MCF 10A (cell line): ENCODE measurements at regions of chr9 and their contacts with region 1.

Region 1: GRCh38 chr9:136790927-136791641 is at the start of gene TMEM141:
- DNase-seq: peak; percentile 99
- H3K4me3 Mint-ChIP-seq: peak within 1 kb of the TSS; percentile 81
- H3K27ac Mint-ChIP-seq: peak within 1 kb of the TSS; percentile 94
- H3K4me1 Mint-ChIP-seq: peaks cover 5% of the 10 kb centered on the region
- H3K27me3 Mint-ChIP-seq: no peaks in the 10 kb centered on the region
- CTCF ChIP-seq: no peak
- total RNA-seq, gene TMEM141: 56.0 and 70.4 TPM in 2 replicates

Region 2: DNA sequence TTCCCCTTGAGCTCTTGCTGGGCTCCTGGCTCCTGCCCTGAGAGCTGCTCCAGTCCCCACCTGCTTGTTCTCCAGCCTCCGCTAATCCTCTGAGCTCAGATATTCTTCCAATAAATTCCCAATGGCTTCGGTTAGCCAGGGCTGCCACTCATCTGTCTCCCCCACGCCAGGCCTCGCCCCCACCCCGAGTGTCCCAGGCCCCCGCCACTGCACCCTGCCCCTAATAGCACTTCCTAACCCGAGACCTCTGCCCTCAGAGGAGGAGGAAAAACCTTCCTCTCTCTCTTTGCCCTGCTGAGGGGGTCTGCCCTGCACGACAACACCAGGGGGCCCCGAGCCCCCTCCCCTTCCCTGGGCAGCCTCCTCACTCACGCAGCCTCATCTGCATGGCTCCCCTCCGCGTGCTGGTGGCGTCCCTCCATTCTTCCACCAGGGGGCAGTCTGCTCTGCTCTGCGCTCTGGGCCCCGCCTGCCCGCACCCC is 21.3 kb before region 1 on chr9:
- CTCF ChIA-PET with region 1: interaction called, 11 read pairs
- POLR2A ChIA-PET with region 1: no interaction called
- intact Hi-C with region 1: no loop called
- DNase-seq: peak; percentile 13
- H3K4me3 Mint-ChIP-seq: no peak overlapping the region
- H3K27ac Mint-ChIP-seq: no peak overlapping the region
- H3K4me1 Mint-ChIP-seq: peaks cover 7% of the 10 kb centered on the region
- H3K27me3 Mint-ChIP-seq: no peaks in the 10 kb centered on the region
- CTCF ChIP-seq: peak; percentile 37

Region 3: DNA sequence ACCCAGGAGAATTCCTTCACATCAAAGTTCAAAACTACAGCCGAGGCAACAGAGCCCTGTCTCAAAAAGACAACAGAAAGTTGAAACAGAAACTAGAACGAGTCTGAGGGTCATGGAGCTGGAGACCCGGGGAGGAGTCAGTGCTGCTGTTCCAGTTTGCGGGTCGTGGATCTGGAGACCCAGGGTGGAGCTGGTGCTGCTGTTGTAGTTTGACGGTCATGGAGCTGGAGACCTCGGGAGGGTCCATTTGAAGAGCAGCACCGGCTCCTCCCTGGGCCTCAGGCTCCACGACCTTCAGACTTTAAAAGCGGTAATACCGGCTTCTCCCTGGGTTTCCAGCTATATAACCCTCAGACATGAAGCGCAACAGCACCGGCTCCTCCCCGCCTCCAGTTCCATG is 13.7 kb before region 1 on chr9:
- CTCF ChIA-PET with region 1: interaction called, 18 read pairs
- POLR2A ChIA-PET with region 1: no interaction called
- intact Hi-C with region 1: no loop called
- DNase-seq: no peak
- H3K4me3 Mint-ChIP-seq: no peak overlapping the region
- H3K27ac Mint-ChIP-seq: no peak overlapping the region
- H3K4me1 Mint-ChIP-seq: no peaks in the 10 kb centered on the region
- H3K27me3 Mint-ChIP-seq: peaks cover 59% of the 10 kb centered on the region
- CTCF ChIP-seq: no peak

Region 4: GRCh38 chr9:136802331-136802730 is 11.2 kb after region 1 on chr9:
- CTCF ChIA-PET with region 1: interaction called, 12 read pairs
- POLR2A ChIA-PET with region 1: interaction called, 33 read pairs
- intact Hi-C with region 1: no loop called
- DNase-seq: no peak
- H3K4me3 Mint-ChIP-seq: no peak overlapping the region
- H3K27ac Mint-ChIP-seq: no peak overlapping the region
- H3K4me1 Mint-ChIP-seq: peaks cover 14% of the 10 kb centered on the region
- H3K27me3 Mint-ChIP-seq: no peaks in the 10 kb centered on the region
- CTCF ChIP-seq: no peak

Region 5: DNA sequence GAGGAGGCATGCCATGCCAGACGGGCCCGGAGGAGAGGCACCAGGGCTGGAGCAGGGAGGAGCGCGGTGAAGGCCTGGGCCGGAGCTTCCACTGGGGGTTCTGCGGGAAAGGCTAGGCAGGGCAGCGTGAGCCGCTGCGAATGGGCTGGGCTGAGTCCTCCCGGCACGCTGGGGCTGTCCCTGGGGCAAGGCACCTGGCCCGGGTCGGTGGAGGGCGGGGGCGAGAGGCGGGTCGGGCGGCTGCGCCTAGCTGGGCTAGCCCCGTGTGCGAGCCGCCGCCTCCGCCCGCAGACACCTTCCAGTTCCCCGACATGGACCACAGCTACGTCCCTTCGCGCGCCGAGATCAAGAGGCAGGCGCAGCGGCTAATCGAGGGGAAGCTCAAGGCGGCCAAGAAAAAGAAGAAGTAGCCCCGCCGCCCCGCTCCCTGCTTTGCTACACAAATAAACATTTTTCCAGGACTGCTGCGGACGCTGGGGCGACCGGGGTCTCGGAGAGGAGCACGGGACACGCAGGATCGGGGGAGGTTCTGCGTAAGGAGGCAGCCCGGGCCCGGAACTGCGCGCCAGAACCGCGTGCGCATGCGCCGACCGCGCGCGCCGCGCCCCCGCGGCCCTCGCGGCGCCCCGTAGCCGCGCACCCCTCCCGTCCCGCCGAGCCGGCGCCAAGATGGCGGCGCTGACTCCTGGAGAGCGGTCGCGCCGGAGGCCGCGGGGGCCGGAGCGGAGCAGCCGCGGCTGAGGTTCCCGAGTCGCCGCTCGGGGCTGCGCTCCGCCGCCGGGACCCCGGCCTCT is 16.4 kb after region 1 on chr9 and contains the start of gene RABL6:
- CTCF ChIA-PET with region 1: interaction called, 12 read pairs
- POLR2A ChIA-PET with region 1: interaction called, 33 read pairs
- intact Hi-C with region 1: no loop called
- DNase-seq: peak; percentile 64
- H3K4me3 Mint-ChIP-seq: peak within 1 kb of the TSS; percentile 76
- H3K27ac Mint-ChIP-seq: no peak within 1 kb of the TSS
- H3K4me1 Mint-ChIP-seq: no peaks in the 10 kb centered on the region
- H3K27me3 Mint-ChIP-seq: no peaks in the 10 kb centered on the region
- CTCF ChIP-seq: no peak
- total RNA-seq, gene RABL6: 77.8 and 84.2 TPM in 2 replicates

Region 6: DNA sequence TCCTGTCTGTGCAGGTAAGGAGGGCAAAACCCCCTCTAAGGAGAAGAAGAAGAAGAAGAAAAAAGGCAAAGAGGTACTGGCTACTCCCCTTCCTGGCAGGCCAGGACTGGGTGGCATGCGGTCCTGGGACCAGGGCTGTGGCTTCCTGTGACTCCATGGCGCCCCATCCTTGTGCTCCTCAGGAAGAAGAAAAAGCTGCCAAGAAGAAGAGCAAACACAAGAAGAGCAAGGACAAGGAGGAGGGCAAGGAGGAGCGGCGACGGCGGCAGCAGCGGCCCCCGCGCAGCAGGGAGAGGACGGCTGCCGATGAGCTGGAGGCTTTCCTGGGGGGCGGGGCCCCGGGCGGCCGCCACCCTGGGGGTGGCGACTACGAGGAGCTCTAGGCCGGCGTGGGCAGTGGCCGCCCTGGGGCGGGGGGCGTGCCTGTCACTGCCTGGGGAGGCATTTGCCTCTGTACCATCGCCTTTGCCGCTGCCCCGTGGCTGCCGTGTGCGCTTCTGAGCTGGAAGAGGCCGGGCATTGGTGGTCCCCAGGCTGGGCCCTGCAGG is 49.1 kb after region 1 on chr9:
- CTCF ChIA-PET with region 1: no interaction called
- POLR2A ChIA-PET with region 1: no interaction called
- intact Hi-C with region 1: no loop called
- DNase-seq: no peak
- H3K4me3 Mint-ChIP-seq: no peak overlapping the region
- H3K27ac Mint-ChIP-seq: peak overlapping the region; percentile 4
- H3K4me1 Mint-ChIP-seq: peaks cover 18% of the 10 kb centered on the region
- H3K27me3 Mint-ChIP-seq: no peaks in the 10 kb centered on the region
- CTCF ChIP-seq: no peak